ENCODE measurements at regions of chr12 and their contacts with region 1.

Region 1: DNA sequence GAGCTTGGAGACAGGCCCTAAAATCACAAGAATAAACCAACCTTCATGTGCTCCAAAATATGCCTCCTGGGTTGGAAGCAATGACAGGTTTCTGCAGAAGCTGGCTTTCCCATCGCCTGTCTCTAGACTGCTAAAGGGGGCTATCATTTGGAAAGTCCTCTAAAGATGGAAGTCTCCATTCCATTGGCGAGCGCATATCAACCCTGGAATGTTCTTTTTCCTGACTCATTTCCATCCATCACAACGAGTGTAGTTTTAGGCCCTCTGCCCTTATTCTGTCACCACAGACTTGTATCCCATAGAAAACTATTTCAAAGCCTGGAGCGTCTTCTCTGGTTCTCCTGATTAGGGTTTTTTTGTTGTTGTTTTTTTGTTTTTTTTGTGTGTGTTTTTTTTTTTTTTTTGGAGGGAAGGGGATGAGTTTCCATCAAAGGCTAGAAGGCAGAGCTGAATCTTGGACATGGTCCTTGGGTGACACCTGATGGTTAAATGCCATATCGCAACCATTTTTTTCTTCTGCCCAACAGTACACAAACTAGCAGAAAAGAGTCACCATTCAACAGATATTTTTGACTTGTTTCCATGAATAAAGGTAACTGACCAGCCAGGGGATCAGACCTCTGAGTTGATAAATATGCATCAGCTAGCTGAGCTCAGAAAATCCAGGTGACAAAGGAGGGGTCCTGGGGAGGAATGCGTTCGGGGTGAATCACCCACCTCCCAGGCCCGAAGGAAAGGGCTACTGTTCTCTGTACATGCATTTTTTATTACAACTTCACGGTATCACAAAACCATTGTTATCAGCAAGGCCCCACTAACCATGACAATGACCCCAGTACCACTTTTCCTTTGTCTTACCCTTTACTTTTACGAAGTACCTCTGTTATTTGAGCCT is 40.5 kb downstream of the KCNA5 start:
- DNase-seq: peak; percentile 45
- H3K4me3 ChIP-seq: no peak overlapping the region
- H3K27ac ChIP-seq: no peak overlapping the region
- H3K4me1 ChIP-seq: no peaks in the 10 kb centered on the region
- CTCF ChIP-seq: peak; percentile 81

Region 2: GRCh38 chr12:4857472-4858291 is 226.5 kb before region 1 on chr12:
- CTCF ChIA-PET with region 1: no interaction called
- POLR2A ChIA-PET with region 1: no interaction called
- intact Hi-C with region 1: loop called (anchors 2 kb)
- DNase-seq: peak; percentile 77
- H3K4me3 ChIP-seq: no peak overlapping the region
- H3K27ac ChIP-seq: no peak overlapping the region
- H3K4me1 ChIP-seq: peaks cover 15% of the 10 kb centered on the region
- CTCF ChIP-seq: peak; percentile 91

Region 3: DNA sequence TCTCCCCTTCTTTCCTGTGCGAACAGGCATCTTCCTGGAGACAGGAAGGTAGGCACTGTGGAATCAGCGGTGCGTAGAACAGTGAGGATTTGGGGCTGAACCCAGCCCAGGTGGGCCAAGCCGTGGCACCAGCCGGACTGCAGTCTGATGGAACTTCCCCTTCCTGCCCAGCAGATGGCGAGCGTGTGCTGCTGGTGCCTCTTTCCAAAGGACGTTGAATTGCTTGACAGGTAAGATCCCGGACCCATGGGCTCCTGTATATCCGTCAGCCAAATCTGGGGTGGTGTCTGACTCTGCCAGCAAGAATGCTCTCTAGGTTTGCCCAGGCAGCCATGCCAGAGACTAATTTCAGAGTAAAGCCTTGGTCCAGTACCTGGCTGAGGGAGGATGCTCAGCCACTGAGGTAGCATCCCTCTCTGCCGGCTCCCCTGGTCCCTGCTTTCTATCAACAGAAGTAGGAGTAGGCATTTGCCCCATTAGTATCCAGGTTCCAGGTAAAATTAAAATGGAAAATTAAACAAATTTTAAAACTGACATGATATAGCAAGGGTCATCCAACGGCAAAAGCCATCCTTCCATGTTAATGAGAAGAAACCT is 61.6 kb before region 1 on chr12:
- CTCF ChIA-PET with region 1: interaction called, 4 read pairs
- POLR2A ChIA-PET with region 1: no interaction called
- intact Hi-C with region 1: loop called (anchors 1 kb)
- DNase-seq: peak; percentile 65
- H3K4me3 ChIP-seq: no peak overlapping the region
- H3K27ac ChIP-seq: no peak overlapping the region
- H3K4me1 ChIP-seq: no peaks in the 10 kb centered on the region
- CTCF ChIP-seq: peak; percentile 92

Region 4: GRCh38 chr12:5059358-5059757 is 24.8 kb before region 1 on chr12:
- CTCF ChIA-PET with region 1: no interaction called
- POLR2A ChIA-PET with region 1: no interaction called
- intact Hi-C with region 1: loop called (anchors 1 kb)
- DNase-seq: no peak
- H3K4me3 ChIP-seq: no peak overlapping the region
- H3K27ac ChIP-seq: no peak overlapping the region
- H3K4me1 ChIP-seq: no peaks in the 10 kb centered on the region
- CTCF ChIP-seq: no peak

Measured in OCI-LY7 (cell line).